ENCODE measurements at regions of chr9 and their contacts with region 1.

Region 1: DNA sequence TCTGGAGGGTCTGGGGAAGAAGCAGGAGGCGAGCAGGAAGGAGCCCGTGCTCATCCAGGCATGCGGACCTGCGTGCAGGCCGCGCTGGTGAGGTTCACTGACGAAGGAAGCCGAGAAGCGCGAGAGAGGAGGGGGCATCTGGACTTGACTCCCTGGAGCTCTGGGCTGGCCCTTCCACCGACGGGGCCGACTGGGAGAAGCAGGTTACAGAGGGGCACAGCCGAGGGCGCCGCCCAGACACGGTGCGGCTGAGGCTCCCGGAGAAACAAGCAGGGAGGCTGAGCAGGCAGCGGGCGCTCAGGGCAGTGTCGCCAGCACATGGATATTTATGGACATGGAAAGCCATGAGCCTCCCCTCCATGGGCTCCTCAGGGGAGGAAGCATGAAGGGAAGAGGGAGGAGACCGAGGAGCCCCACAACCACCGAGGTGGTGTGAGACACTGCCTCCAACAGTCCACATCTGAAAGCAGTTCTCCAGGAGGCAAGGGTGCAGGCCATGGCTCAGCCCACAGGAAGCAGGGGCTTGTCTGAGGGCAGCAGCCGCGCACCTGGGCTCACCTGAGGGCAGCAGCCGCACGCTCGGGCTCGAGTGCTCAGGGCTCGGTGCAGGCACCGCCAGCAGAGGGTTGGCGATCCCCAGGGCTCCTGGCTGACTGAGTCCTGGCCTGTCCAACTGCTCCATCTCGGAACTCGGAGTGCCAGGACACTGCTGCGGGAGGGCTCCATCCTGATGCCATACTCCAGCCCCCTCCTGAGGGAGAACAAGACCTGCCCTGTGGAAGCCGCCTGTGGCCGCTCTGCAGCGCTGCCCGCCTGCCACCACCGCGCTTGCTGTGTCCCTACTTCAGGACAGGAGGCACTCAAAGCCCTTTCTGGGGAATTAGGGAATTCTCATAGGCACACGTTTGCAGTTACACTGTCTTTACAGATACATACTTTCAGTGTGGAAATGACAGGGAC is 15.7 kb upstream of the INPP5E start:
- DNase-seq: no peak
- H3K4me3 ChIP-seq: no peak overlapping the region
- H3K27ac ChIP-seq: no peak overlapping the region
- H3K27me3 ChIP-seq: no peaks in the 10 kb centered on the region
- CTCF ChIP-seq: no peak

Region 2: DNA sequence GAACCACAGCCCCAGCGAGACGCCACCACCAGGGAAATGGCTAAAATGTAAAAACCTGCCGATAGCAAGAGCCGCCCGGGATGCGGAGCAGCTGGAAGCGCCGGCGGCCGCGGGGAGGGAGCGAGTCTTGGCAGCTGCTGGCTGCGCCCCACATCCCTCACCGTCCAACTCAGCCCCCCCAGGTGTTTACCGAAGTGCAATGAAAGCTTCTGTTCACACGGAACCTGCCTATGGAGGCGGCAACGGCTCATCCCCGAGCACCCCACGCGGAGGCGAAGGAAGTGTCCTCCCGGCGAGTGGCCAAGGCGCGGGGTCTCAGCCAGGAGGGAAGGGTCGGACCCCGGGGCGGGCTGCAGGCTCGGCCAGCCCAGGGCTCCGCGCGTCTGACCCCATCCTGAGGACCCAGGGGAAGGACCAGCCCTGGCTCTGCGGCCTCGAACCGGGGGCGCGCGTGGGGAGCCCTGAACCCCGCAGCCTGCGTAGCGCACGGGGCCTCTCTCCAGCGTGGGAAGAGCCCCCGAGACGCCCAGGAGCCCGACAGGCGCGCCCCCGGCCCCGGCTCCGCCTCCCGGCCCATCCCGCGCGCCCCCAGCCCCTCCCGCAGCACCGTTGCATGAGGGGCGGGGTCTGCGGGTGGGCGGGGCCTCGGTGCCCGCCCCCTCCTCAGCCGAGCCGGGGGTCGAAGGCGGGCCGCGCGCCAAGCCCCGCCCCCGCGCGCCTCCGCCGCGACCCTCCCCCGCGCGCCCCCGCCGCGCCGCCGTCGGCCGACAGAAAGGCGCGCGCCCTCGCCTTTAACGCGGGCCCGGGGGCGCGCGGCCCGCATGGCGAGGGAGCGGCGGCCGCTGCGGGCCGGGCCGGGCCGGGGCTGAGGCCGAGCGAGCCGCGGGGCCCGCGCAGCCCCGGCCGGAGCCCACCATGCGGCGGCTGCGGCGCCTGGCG is 256.7 kb after region 1 on chr9 and contains the start of gene DIPK1B:
- CTCF ChIA-PET with region 1: no interaction called
- POLR2A ChIA-PET with region 1: interaction called, 17 read pairs
- DNase-seq: no peak
- H3K4me3 ChIP-seq: peak within 1 kb of the TSS; percentile 44
- H3K27ac ChIP-seq: no peak within 1 kb of the TSS
- H3K27me3 ChIP-seq: peaks cover 16% of the 10 kb centered on the region
- CTCF ChIP-seq: no peak
- polyA plus RNA-seq, gene DIPK1B: 2.8 and 3.6 TPM in 2 replicates

Measured in AG04450 (cell line).